ENCODE measurements at regions of chr12 and their contacts with region 1.

Region 1: GRCh38 chr12:14618983-14619382 is 51.3 kb upstream of the PLBD1 start:
- DNase-seq: no peak
- ATAC-seq: peak; percentile 65
- H3K4me3 Mint-ChIP-seq: no peak overlapping the region
- H3K27ac Mint-ChIP-seq: no peak overlapping the region
- H3K4me1 Mint-ChIP-seq: peaks cover 17% of the 10 kb centered on the region
- H3K27me3 Mint-ChIP-seq: no peaks in the 10 kb centered on the region
- CTCF ChIP-seq: no peak

Region 2: DNA sequence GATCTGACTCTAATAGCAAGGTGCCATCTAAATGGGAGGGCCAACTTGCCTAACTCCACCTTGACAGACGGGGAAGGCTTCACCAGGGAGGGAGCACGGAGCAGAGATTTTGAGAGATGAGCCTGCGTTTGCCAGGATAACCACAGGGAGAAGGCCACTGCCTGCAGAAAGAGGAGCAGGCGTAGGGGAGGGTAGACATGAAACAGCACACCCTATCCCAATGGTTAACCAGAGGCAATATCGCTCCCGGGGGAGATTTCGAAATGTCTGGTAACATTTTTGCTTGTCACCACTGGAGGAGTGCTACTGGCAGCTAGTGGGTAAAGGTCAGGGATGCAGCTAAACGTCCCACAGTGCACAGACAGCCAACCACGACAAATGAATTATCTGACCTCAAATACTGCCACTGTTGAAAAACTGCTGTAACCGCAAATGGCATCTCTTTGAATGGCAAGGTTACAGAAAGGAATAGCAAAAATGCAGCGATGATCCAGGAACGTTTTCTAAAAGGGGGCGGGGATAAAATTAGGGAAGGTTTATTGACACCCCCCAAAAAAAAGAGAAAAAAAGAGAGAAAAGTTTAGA is 379.5 kb before region 1 on chr12:
- CTCF ChIA-PET with region 1: interaction called, 24 read pairs
- POLR2A ChIA-PET with region 1: no interaction called
- DNase-seq: peak; percentile 34
- ATAC-seq: peak; percentile 80
- H3K4me3 Mint-ChIP-seq: peak overlapping the region; percentile 48
- H3K27ac Mint-ChIP-seq: peak overlapping the region; percentile 35
- H3K4me1 Mint-ChIP-seq: peaks cover 26% of the 10 kb centered on the region
- H3K27me3 Mint-ChIP-seq: no peaks in the 10 kb centered on the region
- CTCF ChIP-seq: no peak

Region 3: DNA sequence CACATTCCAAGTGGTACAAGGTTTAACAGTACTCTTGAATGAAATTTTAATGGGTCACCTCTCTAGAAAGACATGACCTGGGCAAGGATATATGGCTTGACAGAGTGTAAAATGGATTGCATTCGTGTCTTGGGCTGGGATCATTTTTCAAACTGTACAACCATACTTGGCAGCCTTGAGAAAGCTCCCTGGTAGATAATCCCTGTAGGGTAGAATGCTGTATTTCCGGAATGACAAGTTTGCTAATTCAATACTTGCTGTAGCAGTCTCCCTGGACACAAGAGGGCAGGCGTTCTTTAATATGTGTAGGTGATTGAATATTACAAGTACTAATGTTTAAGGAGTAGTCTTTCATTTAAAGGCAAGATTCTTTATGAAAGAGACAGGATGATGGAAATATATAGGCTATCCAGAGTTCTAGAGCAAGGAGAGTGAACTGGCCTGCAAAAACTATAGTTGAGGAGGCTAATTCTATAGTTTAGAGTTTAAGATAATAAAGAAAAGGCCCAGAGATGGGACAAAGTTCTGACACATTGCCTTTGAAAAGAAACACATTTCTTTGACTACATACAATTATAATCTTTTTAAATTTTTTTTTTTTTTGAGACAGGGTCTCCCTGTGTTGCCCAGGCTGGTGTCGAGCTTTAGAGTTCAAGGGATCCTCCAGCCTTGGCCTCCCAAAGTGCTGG is 104.7 kb before region 1 on chr12:
- CTCF ChIA-PET with region 1: interaction called, 10 read pairs
- POLR2A ChIA-PET with region 1: no interaction called
- DNase-seq: no peak
- ATAC-seq: peak; percentile 84
- H3K4me3 Mint-ChIP-seq: no peak overlapping the region
- H3K27ac Mint-ChIP-seq: no peak overlapping the region; the same call in 1 of the 2 replicates
- H3K4me1 Mint-ChIP-seq: peaks cover 18% of the 10 kb centered on the region
- H3K27me3 Mint-ChIP-seq: no peaks in the 10 kb centered on the region; the same call in 1 of the 2 replicates
- CTCF ChIP-seq: no peak; the same call in 1 of the 2 replicates

Region 4: DNA sequence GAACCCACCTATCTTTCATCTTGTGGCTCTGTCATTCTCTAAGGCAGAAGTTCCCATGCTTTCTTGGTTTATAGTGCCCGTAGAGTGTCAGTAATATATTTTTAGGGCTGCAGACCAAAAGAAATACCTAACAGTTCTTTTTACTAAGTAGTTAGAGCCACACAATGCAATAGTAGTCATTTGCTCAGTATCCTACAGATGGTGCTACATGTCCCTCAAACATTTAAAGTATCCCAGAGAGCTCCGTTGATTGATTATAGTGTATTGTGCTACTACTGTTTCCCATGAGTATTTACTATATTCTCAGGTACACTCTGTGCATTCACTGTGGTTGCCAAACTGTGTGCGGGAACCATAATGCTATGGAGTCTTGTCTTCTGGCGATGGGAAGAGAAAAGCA is 46.6 kb before region 1 on chr12:
- CTCF ChIA-PET with region 1: interaction called, 15 read pairs
- POLR2A ChIA-PET with region 1: no interaction called
- DNase-seq: no peak
- ATAC-seq: 0 out of 2 replicates have a peak, but pooled peaks have one; percentile 15
- H3K4me3 Mint-ChIP-seq: no peak overlapping the region
- H3K27ac Mint-ChIP-seq: no peak overlapping the region
- H3K4me1 Mint-ChIP-seq: peaks cover 45% of the 10 kb centered on the region
- H3K27me3 Mint-ChIP-seq: peaks cover 6% of the 10 kb centered on the region
- CTCF ChIP-seq: no peak

Region 5: DNA sequence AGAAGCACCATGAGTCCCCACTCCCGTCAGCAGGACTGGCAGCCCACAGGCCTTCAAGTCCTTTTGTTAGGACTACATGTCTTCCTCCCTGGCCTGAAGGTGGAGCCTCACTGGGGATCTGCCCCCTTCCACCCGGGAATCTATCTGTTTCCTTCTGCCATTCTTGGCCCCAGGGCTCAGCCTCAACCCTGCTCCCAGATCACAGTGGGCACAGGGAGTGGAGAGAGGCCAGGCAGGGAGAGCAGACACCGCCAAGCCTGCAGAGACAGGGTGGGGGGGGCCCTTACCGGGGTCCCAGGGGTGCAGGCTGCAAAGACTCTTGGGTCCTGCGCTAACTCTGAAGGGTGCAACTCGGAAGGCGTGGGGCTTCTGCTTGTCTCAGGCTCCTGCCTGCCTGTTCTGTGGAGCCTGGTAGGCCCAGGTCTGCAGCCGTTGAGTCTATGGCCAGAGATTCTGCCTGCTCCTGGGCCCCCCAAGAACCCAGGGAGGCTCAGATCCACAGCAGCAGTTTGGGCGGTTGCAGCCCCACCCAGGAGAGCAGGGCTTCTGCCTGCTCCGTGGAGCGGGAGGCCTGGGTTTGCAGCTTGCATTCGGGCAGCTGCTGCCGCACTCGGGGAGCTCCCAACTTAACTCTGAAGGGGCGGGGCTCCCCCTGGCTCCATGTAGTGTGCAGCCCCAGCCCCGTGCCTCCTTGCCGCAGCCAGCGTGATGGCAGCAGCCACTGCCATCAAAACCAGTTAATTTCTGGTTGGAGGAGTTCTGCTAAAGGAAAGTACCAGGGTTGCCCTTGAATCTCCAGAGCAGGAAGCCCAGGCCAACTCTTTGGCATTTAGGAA is 29.6 kb before region 1 on chr12:
- CTCF ChIA-PET with region 1: no interaction called
- POLR2A ChIA-PET with region 1: no interaction called
- DNase-seq: peak; percentile 38
- ATAC-seq: peak; percentile 94
- H3K4me3 Mint-ChIP-seq: no peak overlapping the region
- H3K27ac Mint-ChIP-seq: no peak overlapping the region
- H3K4me1 Mint-ChIP-seq: no peaks in the 10 kb centered on the region; the same call in 1 of the 2 replicates
- H3K27me3 Mint-ChIP-seq: no peaks in the 10 kb centered on the region; the same call in 1 of the 2 replicates
- CTCF ChIP-seq: no peak

Measured in WTC11 (cell line).